ENCODE measurements at regions of chr10 and their contacts with region 1.

Region 1: DNA sequence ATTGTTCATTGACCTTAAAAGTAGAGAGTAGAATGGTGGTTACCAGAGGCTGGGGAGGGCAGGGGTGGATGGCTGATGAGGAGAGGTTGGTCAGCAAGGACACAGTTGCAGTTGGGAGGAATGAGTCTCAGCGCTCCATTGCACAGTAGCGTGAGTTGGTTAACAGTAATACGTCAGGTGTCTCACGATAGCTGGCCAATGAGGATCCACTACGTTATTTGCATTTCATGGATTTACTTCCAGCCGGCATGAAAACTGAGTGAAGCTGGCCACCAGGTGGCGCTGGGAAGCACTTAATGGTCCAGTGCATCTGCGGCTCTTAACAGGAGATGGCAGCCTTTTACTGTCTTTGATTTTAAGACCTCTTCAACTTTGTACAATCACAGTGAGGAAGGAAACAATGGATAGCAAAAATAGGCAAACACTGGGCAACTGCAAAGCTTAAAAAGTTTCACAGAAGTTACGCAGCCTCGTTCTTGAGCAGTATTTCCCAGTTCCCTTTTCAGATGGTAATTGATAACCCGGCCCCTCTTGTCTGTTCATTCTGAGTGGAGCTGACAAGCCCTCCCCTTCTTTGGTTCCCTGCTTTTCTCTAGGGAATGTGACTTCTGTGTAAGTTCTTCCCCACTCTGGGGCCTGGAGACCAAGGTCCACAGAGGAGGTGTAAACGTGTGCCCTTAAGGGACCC is 23.7 kb downstream of the AKR1E2 start:
- DNase-seq: peak; percentile 97
- H3K4me3 ChIP-seq: no peak overlapping the region
- H3K27ac ChIP-seq: 0 out of 2 replicates have a peak overlapping the region, but pooled peaks have one; percentile 25
- H3K4me1 ChIP-seq: peaks cover 24% of the 10 kb centered on the region
- H3K27me3 ChIP-seq: no peaks in the 10 kb centered on the region

Region 2: GRCh38 chr10:5094265-5095205 is 244.8 kb after region 1 on chr10 and contains the start of gene AKR1C3:
- in situ Hi-C with region 1: loop called (anchors 10 kb)
- DNase-seq: peak; percentile 88
- H3K4me3 ChIP-seq: peak within 1 kb of the TSS; percentile 89
- H3K27ac ChIP-seq: peak within 1 kb of the TSS; percentile 75
- H3K4me1 ChIP-seq: peaks cover 12% of the 10 kb centered on the region; the same call in 1 of the 2 replicates
- H3K27me3 ChIP-seq: no peaks in the 10 kb centered on the region
- total RNA-seq, gene AKR1C3: 23.2 and 36.2 TPM in 2 replicates

Region 3: DNA sequence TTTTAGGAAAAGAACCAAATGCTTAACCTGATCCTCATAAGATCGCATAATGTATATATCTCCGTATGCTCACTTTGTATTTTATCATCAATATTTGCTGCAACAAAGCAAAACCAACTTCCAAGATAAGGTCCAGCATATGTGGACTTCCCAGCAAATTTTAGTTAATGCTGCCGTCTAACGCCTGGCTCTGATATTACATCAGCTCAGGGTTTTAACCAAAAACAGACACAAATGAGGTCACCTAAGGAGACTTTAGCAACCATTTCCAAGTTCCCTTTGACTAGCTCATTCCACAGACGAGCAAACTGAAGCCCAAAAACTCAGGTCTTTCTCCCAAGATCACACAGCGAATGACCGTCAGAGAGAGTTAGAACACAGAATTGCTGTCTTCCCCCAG is 455.7 kb after region 1 on chr10:
- in situ Hi-C with region 1: loop called (anchors 10 kb)
- DNase-seq: peak; percentile 93
- H3K4me3 ChIP-seq: no peak overlapping the region
- H3K27ac ChIP-seq: peak overlapping the region; percentile 37
- H3K4me1 ChIP-seq: no peaks in the 10 kb centered on the region
- H3K27me3 ChIP-seq: no peaks in the 10 kb centered on the region

Region 4: DNA sequence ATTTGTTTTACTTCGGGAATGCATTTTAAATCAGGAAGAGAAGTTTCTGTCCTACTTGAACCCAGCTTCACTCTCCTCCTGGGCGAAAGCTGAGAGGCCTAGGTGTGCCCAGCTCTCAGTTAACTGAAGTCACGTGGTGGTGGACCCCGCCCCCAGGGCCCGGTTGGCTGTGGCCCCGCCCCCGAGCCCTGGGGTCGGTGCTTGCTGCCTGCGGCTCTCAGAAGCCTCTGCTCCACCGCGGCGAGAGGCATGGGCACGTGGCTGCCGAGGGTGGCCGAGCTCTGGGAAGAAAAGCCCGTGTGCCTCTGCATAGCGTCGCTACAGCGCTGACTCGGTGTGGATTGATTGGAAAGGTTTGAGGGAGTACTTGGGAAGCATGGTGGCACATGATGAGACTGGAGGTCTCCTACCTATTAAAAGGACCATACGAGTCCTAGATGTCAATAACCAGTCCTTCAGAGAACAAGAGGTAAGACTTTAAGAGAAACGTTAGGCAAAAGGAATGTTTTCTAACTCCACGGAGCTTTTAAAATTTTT is 596.8 kb after region 1 on chr10:
- in situ Hi-C with region 1: no loop called
- DNase-seq: peak; percentile 94
- H3K4me3 ChIP-seq: peak overlapping the region; percentile 79
- H3K27ac ChIP-seq: peak overlapping the region; percentile 74
- H3K4me1 ChIP-seq: peaks cover 25% of the 10 kb centered on the region
- H3K27me3 ChIP-seq: no peaks in the 10 kb centered on the region

Region 5: GRCh38 chr10:5623081-5623748 is 773.5 kb after region 1 on chr10:
- in situ Hi-C with region 1: loop called (anchors 25 kb)
- DNase-seq: peak; percentile 95
- H3K4me3 ChIP-seq: no peak overlapping the region
- H3K27ac ChIP-seq: peak overlapping the region; percentile 71
- H3K4me1 ChIP-seq: peaks cover 25% of the 10 kb centered on the region
- H3K27me3 ChIP-seq: no peaks in the 10 kb centered on the region

Region 6: GRCh38 chr10:6558759-6559461 is 1709.2 kb after region 1 on chr10:
- in situ Hi-C with region 1: no loop called
- DNase-seq: no peak
- H3K4me3 ChIP-seq: no peak overlapping the region
- H3K27ac ChIP-seq: no peak overlapping the region
- H3K4me1 ChIP-seq: no peaks in the 10 kb centered on the region
- H3K27me3 ChIP-seq: peaks cover 6% of the 10 kb centered on the region; the same call in 1 of the 2 replicates